HepG2 (cell line): ENCODE measurements at regions of chr20 and their contacts with region 1.

Region 1: GRCh38 chr20:17873410-17874270 is 95.0 kb downstream of the SNX5 start:
- DNase-seq: peak; percentile 91
- ATAC-seq: peak; percentile 71
- H3K4me3 ChIP-seq: peak overlapping the region in 2 of 3 experiments; percentile 1 to 55; a peak in 3 of 6 replicates
- H3K27ac ChIP-seq: peak overlapping the region; percentile 78
- H3K4me1 ChIP-seq: peaks cover 86% of the 10 kb centered on the region
- H3K27me3 ChIP-seq: no peaks in the 10 kb centered on the region
- CTCF ChIP-seq: peak; percentile 12; the same call in 1 of the 2 replicates
- EP300 ChIP-seq: no peak; a peak in 1 of 4 replicates
- POLR2A ChIP-seq: peak; percentile 73 to 77
- RAD21 ChIP-seq: peak; percentile 11

Region 2: GRCh38 chr20:17710379-17711266 is 163.0 kb before region 1 on chr20:
- CTCF ChIA-PET with region 1: no interaction called
- POLR2A ChIA-PET with region 1: interaction called, 15 read pairs
- in situ Hi-C with region 1: no loop called
- intact Hi-C with region 1: no loop called
- DNase-seq: peak; percentile 92
- ATAC-seq: peak; percentile 93
- H3K4me3 ChIP-seq: peak overlapping the region; percentile 36 to 70 (median 54)
- H3K27ac ChIP-seq: peak overlapping the region; percentile 43
- H3K4me1 ChIP-seq: peaks cover 75% of the 10 kb centered on the region
- H3K27me3 ChIP-seq: peaks cover 2 to 23% of the 10 kb centered on the region in 2 experiments; a peak in 2 of 5 replicates
- CTCF ChIP-seq: 0 out of 2 replicates have a peak, but pooled peaks have one; percentile 6
- EP300 ChIP-seq: peak in 1 of 2 experiments; percentile 66; a peak in 2 of 4 replicates
- POLR2A ChIP-seq: peak; percentile 59 to 61; a peak in 3 of 4 replicates
- RAD21 ChIP-seq: peak; percentile 31; the same call in 1 of the 2 replicates

Region 3: GRCh38 chr20:17806739-17807441 is 66.8 kb before region 1 on chr20:
- CTCF ChIA-PET with region 1: no interaction called
- POLR2A ChIA-PET with region 1: interaction called, 10 read pairs
- in situ Hi-C with region 1: no loop called
- intact Hi-C with region 1: loop called (anchors 5 kb)
- DNase-seq: no peak
- ATAC-seq: peak; percentile 24
- H3K4me3 ChIP-seq: peak overlapping the region in 2 of 3 experiments; percentile 16 to 49; a peak in 1 of 6 replicates
- H3K27ac ChIP-seq: no peak overlapping the region
- H3K4me1 ChIP-seq: peaks cover 83% of the 10 kb centered on the region
- H3K27me3 ChIP-seq: peaks cover 0 to 1% of the 10 kb centered on the region in 2 experiments; a peak in 2 of 5 replicates
- CTCF ChIP-seq: peak; percentile 54
- EP300 ChIP-seq: no peak
- POLR2A ChIP-seq: no peak
- RAD21 ChIP-seq: no peak

Region 4: GRCh38 chr20:17843246-17844132 is 30.2 kb before region 1 on chr20:
- CTCF ChIA-PET with region 1: no interaction called
- POLR2A ChIA-PET with region 1: interaction called, 13 read pairs
- in situ Hi-C with region 1: no loop called
- intact Hi-C with region 1: no loop called
- DNase-seq: no peak
- ATAC-seq: peak; percentile 69
- H3K4me3 ChIP-seq: peak overlapping the region in 1 of 3 experiments; percentile 42; a peak in 1 of 6 replicates
- H3K27ac ChIP-seq: no peak overlapping the region
- H3K4me1 ChIP-seq: peaks cover 71% of the 10 kb centered on the region
- H3K27me3 ChIP-seq: peaks cover 8 to 21% of the 10 kb centered on the region in 2 experiments; a peak in 3 of 5 replicates
- CTCF ChIP-seq: no peak
- EP300 ChIP-seq: no peak
- POLR2A ChIP-seq: no peak
- RAD21 ChIP-seq: no peak

Region 5: DNA sequence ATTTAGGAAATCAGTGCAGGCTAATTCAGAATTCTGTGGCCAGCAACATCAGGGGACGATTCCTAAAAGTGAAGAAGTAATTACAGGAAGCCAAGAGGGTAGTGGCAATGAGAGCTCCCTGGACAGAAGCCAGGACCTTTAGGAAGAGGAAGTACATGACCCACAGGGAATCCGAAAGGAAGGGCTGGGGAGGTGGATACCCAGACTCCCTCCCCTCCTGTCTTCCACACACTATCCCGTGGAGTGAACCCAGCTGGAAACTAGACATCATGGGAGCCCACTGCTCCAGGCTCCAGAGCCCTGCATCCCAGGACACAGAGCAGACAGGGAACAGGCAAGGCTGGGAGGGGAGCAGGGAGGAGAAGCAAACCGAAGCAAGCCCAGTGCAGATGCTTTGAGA is 11.9 kb after region 1 on chr20:
- CTCF ChIA-PET with region 1: no interaction called
- POLR2A ChIA-PET with region 1: interaction called, 724 read pairs
- in situ Hi-C with region 1: no loop called
- intact Hi-C with region 1: no loop called
- DNase-seq: no peak
- ATAC-seq: no peak
- H3K4me3 ChIP-seq: no peak overlapping the region
- H3K27ac ChIP-seq: no peak overlapping the region
- H3K4me1 ChIP-seq: peaks cover 83% of the 10 kb centered on the region
- H3K27me3 ChIP-seq: no peaks in the 10 kb centered on the region
- CTCF ChIP-seq: no peak
- EP300 ChIP-seq: no peak
- POLR2A ChIP-seq: no peak
- RAD21 ChIP-seq: no peak